GM13977 (cell line): ENCODE measurements at regions of chr19 and their contacts with region 1.

Region 1: GRCh38 chr19:6632002-6632621 is 37.8 kb downstream of the TNFSF14 start:
- DNase-seq: peak; percentile 60
- CTCF ChIP-seq: peak; percentile 71

Region 2: GRCh38 chr19:6516659-6517291 is 115.3 kb before region 1 on chr19:
- in situ Hi-C with region 1: loop called (anchors 5 kb)
- DNase-seq: peak; percentile 83
- CTCF ChIP-seq: peak; percentile 95